ENCODE measurements at regions of chr10 and their contacts with region 1.

Region 1: DNA sequence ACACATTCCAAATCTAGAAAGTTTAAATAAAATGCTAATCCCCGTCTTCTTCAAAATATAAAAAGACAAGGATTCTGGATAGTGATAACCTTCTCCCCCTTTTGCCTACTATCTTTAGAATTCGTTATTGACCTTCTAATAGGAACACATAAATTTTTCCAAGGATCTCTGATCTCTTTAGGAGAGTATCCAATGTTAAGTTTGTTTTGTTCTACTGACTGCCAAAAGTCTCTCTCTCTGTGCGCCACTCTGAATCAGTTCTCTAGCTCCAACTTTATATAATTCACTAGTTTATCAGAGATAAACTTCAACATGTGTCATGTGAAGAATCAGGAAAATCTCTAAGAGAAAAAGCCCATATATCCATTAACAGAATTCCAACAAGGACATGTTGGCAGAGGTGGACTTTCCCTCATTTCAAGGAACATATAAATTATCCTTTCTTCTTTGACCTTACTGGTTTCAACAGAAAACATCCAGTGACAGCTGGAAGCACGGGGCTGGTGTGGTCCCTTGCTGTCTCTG is 615.6 kb downstream of the KCNMA1 start:
- DNase-seq: no peak
- H3K4me3 ChIP-seq: no peak overlapping the region
- H3K27ac ChIP-seq: no peak overlapping the region
- H3K4me1 ChIP-seq: no peaks in the 10 kb centered on the region
- H3K27me3 ChIP-seq: peaks cover 2 to 4% of the 10 kb centered on the region in 2 experiments
- CTCF ChIP-seq: no peak
- POLR2A ChIP-seq: no peak

Region 2: DNA sequence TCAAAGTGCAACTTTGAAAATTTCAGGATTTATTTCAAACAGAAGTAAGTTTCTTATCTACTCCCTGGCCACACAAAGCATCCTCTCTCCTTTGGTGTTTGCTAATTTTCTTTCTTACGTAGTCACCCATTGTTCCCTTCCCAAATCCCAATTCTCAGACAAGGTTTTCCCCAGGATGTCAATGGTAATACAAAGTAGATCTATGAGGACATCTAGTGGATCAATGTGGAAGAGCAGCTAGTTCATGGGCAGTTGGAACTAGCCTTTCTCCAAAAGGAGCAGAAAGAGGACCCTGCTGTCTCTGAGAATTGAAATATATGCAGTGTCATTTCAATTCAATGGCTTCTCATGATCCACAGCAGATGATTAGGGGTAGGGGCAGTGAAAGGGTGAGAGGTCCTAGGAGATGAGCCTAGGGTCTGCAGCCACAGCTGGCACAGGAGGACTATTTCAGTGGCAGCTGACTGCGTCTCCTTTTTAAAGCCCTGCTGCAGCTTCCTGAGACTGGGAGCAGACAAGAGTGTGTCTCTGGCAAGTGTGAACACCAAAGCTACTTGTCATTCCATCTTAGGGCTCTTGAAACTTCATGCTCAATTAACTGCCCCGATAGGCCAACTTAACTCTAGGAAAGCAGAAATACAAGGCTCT is 17.0 kb before region 1 on chr10:
- CTCF ChIA-PET with region 1: interaction called, 10 read pairs
- POLR2A ChIA-PET with region 1: no interaction called
- dilution Hi-C with region 1: no loop called
- intact Hi-C with region 1: no loop called
- DNase-seq: peak; percentile 49
- H3K4me3 ChIP-seq: no peak overlapping the region
- H3K27ac ChIP-seq: no peak overlapping the region
- H3K4me1 ChIP-seq: no peaks in the 10 kb centered on the region
- H3K27me3 ChIP-seq: peaks cover 4 to 5% of the 10 kb centered on the region in 2 experiments
- CTCF ChIP-seq: peak; percentile 53 to 66
- POLR2A ChIP-seq: no peak

Region 3: DNA sequence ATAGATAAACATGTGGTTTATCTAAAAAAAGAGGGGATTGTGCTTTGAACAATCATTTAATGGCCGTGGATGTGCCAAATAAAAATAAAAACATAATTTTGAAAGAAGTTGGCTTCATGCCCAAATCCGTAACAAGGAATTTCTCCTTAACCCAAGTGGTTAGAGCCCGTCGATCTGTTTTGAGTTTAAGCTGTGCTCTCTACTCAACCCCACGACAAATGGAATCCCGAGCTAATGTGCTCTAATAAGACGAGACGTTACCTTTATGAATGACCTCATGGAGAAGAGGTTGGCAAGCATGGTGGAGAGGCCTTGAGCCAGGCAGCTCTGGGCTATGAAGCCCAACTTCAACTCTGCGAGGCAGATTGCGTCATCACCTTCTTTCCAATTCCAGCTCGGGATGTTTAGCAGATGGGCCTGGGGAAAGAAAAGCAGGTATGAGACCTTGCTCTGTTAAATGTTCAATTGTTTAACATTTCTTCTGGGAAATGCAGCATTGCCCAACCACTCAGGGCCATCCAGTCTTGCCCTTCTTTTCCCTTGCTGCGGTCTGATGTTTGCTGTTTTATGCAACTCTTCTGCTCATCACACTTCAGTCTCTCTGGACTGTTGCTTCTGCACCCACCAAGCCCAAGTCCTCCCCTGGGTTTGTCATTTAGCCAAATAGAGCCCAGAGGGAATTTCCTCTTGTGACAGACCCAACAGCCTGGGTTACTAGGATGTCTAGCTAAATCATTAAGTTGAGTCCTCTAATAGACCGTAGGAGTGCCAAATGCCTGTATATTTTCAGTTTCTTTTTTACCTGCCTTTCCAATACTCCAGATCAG is 51.0 kb after region 1 on chr10:
- CTCF ChIA-PET with region 1: no interaction called
- POLR2A ChIA-PET with region 1: no interaction called
- dilution Hi-C with region 1: no loop called
- intact Hi-C with region 1: no loop called
- DNase-seq: no peak
- H3K4me3 ChIP-seq: no peak overlapping the region
- H3K27ac ChIP-seq: no peak overlapping the region
- H3K4me1 ChIP-seq: no peaks in the 10 kb centered on the region
- H3K27me3 ChIP-seq: peaks cover 0 to 8% of the 10 kb centered on the region in 2 experiments
- CTCF ChIP-seq: no peak
- POLR2A ChIP-seq: no peak